T-cell (primary cell): ENCODE measurements at regions of chr17 and their contacts with region 1.

Region 1: GRCh38 chr17:68184816-68185436 is 62.9 kb upstream of the AMZ2 start:
- DNase-seq: peak in 32 of 35 experiments; percentile 31 to 85 (median 61)
- ATAC-seq: peak; percentile 54 to 81 (median 65)
- H3K4me3 ChIP-seq: peak overlapping the region in 1 of 2 donors; percentile 1
- H3K4me3 Mint-ChIP-seq: peak overlapping the region; percentile 61 to 91 (median 86)
- H3K27ac ChIP-seq: peak overlapping the region; percentile 86
- H3K27ac Mint-ChIP-seq: peak overlapping the region; percentile 84 to 95
- H3K4me1 ChIP-seq: peaks cover 39 to 56% of the 10 kb centered on the region in 2 experiments
- H3K4me1 Mint-ChIP-seq: peaks cover 54 to 81% (median 64%) of the 10 kb centered on the region in 3 donors
- H3K27me3 ChIP-seq: no peaks in the 10 kb centered on the region
- H3K27me3 Mint-ChIP-seq: no peaks in the 10 kb centered on the region

Region 2: GRCh38 chr17:68172461-68172954 is 12.4 kb before region 1 on chr17:
- CTCF ChIA-PET with region 1: interaction called, 9 to 14 read pairs
- POLR2A ChIA-PET with region 1: interaction called in 1 of 2 experiments, 3 read pairs
- DNase-seq: peak; percentile 35 to 85 (median 68)
- ATAC-seq: peak; percentile 67 to 78 (median 72)
- H3K4me3 ChIP-seq: no peak overlapping the region
- H3K4me3 Mint-ChIP-seq: no peak overlapping the region
- H3K27ac ChIP-seq: no peak overlapping the region
- H3K27ac Mint-ChIP-seq: no peak overlapping the region
- H3K4me1 ChIP-seq: peaks cover 11 to 28% of the 10 kb centered on the region in 2 experiments
- H3K4me1 Mint-ChIP-seq: peaks cover 14 to 28% (median 22%) of the 10 kb centered on the region in 3 donors
- H3K27me3 ChIP-seq: no peaks in the 10 kb centered on the region
- H3K27me3 Mint-ChIP-seq: no peaks in the 10 kb centered on the region

Region 3: GRCh38 chr17:68200689-68201417 is 15.9 kb after region 1 on chr17:
- CTCF ChIA-PET with region 1: interaction called, 12 to 45 read pairs
- POLR2A ChIA-PET with region 1: interaction called in 1 of 2 experiments, 10 read pairs
- DNase-seq: peak in 33 of 35 experiments; percentile 47 to 82 (median 66)
- ATAC-seq: peak; percentile 22 to 38 (median 30)
- H3K4me3 ChIP-seq: peak overlapping the region; percentile 62 to 86
- H3K4me3 Mint-ChIP-seq: peak overlapping the region; percentile 76 to 84 (median 77)
- H3K27ac ChIP-seq: peak overlapping the region; percentile 3
- H3K27ac Mint-ChIP-seq: peak overlapping the region in 1 of 2 donors; percentile 76
- H3K4me1 ChIP-seq: peaks cover 22 to 62% of the 10 kb centered on the region in 2 experiments
- H3K4me1 Mint-ChIP-seq: peaks cover 21 to 39% (median 37%) of the 10 kb centered on the region in 3 donors
- H3K27me3 ChIP-seq: peaks cover 0 to 47% of the 10 kb centered on the region in 2 experiments
- H3K27me3 Mint-ChIP-seq: peaks cover 0 to 8% of the 10 kb centered on the region in 2 donors

Region 4: DNA sequence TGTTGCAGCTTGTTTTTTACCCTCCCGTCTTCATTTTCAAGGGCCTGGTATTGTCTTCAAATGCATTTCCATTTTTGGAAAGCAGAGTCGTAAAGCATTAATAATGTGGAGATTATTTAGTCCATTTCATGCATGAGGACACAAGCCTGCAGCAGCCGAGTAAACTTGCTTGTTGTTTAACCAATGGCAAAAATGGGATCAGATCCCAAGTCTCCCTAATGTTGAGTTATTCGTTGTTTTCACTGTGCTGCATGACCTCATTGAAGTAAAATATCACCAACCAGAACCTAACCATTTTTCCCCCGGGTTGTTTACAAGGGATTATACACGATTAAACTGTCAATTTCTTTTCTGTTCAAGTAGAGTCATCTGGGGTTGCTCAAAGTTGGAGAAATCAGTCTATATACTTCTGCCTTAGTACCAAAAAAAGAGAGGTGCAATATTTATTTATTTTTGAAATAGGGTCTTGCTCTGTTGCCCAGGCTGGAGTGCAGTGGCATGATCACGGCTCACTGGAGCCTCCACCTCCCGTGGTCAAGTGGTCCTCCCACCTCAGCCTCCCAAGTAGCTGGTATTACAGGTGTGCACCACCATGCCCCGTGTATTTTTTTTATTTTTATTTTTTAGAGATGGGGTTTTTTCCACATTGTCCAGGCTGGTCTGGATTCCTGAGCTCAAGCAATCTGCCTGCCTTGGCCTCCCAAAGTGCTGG is 75.3 kb after region 1 on chr17:
- CTCF ChIA-PET with region 1: interaction called in 1 of 2 experiments, 12 read pairs
- POLR2A ChIA-PET with region 1: no interaction called
- DNase-seq: no peak
- ATAC-seq: no peak
- H3K4me3 ChIP-seq: no peak overlapping the region
- H3K4me3 Mint-ChIP-seq: peak overlapping the region in 1 of 3 donors; percentile 68
- H3K27ac ChIP-seq: peak overlapping the region; percentile 89
- H3K27ac Mint-ChIP-seq: peak overlapping the region; percentile 89 to 92
- H3K4me1 ChIP-seq: peaks cover 32 to 52% of the 10 kb centered on the region in 2 experiments
- H3K4me1 Mint-ChIP-seq: peaks cover 58 to 68% (median 66%) of the 10 kb centered on the region in 3 donors
- H3K27me3 ChIP-seq: no peaks in the 10 kb centered on the region
- H3K27me3 Mint-ChIP-seq: no peaks in the 10 kb centered on the region

Region 5: DNA sequence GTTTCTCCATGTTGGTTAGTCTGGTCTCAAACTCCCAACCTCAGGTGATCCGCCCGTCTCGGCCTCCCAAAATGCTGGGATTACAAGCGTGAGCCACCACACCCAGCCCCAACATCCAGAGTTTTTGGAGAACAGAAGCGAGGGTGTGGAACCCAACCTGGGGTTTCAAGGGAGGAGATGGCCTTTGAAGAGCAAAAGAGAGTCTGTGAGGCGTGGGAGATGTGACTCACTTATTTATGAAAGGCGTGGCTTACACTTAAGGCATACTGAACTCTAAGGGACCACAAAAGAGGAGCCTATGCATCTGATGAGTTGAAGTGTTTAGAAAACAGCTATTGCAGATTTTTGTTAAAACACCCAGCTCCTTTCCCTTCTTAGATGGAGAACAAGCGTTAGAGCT is 125.2 kb after region 1 on chr17:
- CTCF ChIA-PET with region 1: no interaction called
- POLR2A ChIA-PET with region 1: no interaction called
- DNase-seq: peak in 3 of 35 experiments; percentile 26 to 44 (median 31)
- ATAC-seq: peak; percentile 71 to 90 (median 84)
- H3K4me3 ChIP-seq: no peak overlapping the region
- H3K4me3 Mint-ChIP-seq: no peak overlapping the region
- H3K27ac ChIP-seq: no peak overlapping the region
- H3K27ac Mint-ChIP-seq: peak overlapping the region; percentile 23 to 44
- H3K4me1 ChIP-seq: peaks cover 11 to 53% of the 10 kb centered on the region in 2 experiments
- H3K4me1 Mint-ChIP-seq: peaks cover 59 to 65% (median 60%) of the 10 kb centered on the region in 3 donors
- H3K27me3 ChIP-seq: no peaks in the 10 kb centered on the region
- H3K27me3 Mint-ChIP-seq: no peaks in the 10 kb centered on the region